Aorta (tissue), 5 donors: ENCODE measurements at regions of chr21 and their contacts with region 1.

Region 1: GRCh38 chr21:28154121-28154520 is 838.6 kb downstream of the LTN1 start:
- DNase-seq: no peak
- ATAC-seq: no peak
- H3K4me3 ChIP-seq: no peak overlapping the region
- H3K27ac ChIP-seq: no peak overlapping the region
- H3K4me1 ChIP-seq: no peaks in the 10 kb centered on the region
- H3K27me3 ChIP-seq: no peaks in the 10 kb centered on the region

Region 2: DNA sequence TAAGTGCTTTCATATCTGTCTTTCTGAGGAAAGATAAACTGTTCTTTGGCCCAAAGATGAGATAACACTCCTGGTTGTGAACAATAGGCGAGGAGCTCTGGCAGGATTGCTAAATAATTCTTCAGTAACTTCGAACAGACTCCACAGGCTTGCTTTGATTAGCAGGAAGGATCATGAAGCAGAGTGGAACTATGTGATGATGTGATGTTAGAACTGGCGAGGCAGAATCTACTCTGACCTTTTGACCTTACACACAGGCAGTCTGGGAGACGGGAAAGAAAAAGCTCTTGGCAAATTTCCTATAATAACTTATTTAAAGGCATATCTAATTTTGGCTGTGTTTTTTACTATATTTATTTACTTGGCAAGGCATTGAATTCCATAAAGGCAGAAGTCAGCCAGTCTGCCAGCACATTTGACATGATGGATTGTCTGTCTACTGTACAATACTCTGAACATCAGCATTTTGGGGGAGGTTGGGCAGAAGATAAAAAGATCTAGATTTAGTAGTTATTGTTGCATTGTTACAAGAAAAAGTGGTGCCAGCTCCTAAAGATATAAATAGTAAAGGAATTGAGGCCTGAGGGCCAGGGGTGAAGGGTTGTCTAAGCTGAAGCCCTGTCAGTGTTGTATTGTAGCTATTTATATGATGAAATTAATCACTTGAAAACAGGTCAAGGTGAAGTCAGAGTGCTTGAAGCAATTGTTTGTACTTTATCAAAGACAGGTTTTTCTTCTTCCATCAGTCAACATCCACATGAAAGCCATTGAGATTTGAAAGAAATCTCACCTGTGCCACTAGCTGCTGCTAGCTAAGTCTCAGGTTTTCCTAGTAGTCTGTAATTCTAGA is 129.7 kb after region 1 on chr21:
- intact Hi-C with region 1: loop called in 1 of 2 experiments (anchors 10 kb)
- DNase-seq: no peak
- ATAC-seq: peak; percentile 65
- H3K4me3 ChIP-seq: no peak overlapping the region
- H3K27ac ChIP-seq: no peak overlapping the region
- H3K4me1 ChIP-seq: peaks cover 2 to 3% of the 10 kb centered on the region in 2 donors
- H3K27me3 ChIP-seq: no peaks in the 10 kb centered on the region

Region 3: GRCh38 chr21:29082046-29082815 is 928.1 kb after region 1 on chr21:
- intact Hi-C with region 1: no loop called
- DNase-seq: no peak
- ATAC-seq: no peak
- H3K4me3 ChIP-seq: no peak overlapping the region
- H3K27ac ChIP-seq: no peak overlapping the region
- H3K4me1 ChIP-seq: peaks cover 2% of the 10 kb centered on the region in 2 donors
- H3K27me3 ChIP-seq: no peaks in the 10 kb centered on the region